GM13977 (cell line): ENCODE measurements at regions of chr14 and their contacts with region 1.

Region 1: GRCh38 chr14:73463411-73463810 is 5.1 kb upstream of the NUMB start:
- DNase-seq: no peak
- CTCF ChIP-seq: no peak

Region 2: GRCh38 chr14:73295198-73295796 is 168.1 kb before region 1 on chr14:
- in situ Hi-C with region 1: loop called (anchors 10 kb)
- DNase-seq: no peak
- CTCF ChIP-seq: peak; percentile 62